Thyroid gland (tissue), 4 donors: ENCODE measurements at regions of chr17 and their contacts with region 1.

Region 1: GRCh38 chr17:700504-701094 is 14.0 kb downstream of the VPS53 start:
- DNase-seq: no peak
- H3K4me3 ChIP-seq: no peak overlapping the region
- H3K27ac ChIP-seq: no peak overlapping the region
- H3K4me1 ChIP-seq: peaks cover 29% of the 10 kb centered on the region in 2 donors
- H3K27me3 ChIP-seq: no peaks in the 10 kb centered on the region
- CTCF ChIP-seq: peak; percentile 34 to 81 (median 58)
- POLR2A ChIP-seq: no peak

Region 2: GRCh38 chr17:412211-413015 is 288.2 kb before region 1 on chr17:
- intact Hi-C with region 1: loop called (anchors 2 kb)
- DNase-seq: peak; percentile 55 to 63
- H3K4me3 ChIP-seq: no peak overlapping the region
- H3K27ac ChIP-seq: no peak overlapping the region
- H3K4me1 ChIP-seq: peaks cover 10 to 23% of the 10 kb centered on the region in 2 donors
- H3K27me3 ChIP-seq: no peaks in the 10 kb centered on the region
- CTCF ChIP-seq: peak; percentile 50 to 86 (median 81)
- POLR2A ChIP-seq: no peak

Region 3: GRCh38 chr17:520447-521182 is 180.0 kb before region 1 on chr17:
- intact Hi-C with region 1: no loop called
- DNase-seq: no peak
- H3K4me3 ChIP-seq: no peak overlapping the region
- H3K27ac ChIP-seq: peak overlapping the region in 1 of 3 donors; percentile 43
- H3K4me1 ChIP-seq: peaks cover 0 to 6% of the 10 kb centered on the region in 2 donors
- H3K27me3 ChIP-seq: no peaks in the 10 kb centered on the region
- CTCF ChIP-seq: no peak
- POLR2A ChIP-seq: no peak

Region 4: DNA sequence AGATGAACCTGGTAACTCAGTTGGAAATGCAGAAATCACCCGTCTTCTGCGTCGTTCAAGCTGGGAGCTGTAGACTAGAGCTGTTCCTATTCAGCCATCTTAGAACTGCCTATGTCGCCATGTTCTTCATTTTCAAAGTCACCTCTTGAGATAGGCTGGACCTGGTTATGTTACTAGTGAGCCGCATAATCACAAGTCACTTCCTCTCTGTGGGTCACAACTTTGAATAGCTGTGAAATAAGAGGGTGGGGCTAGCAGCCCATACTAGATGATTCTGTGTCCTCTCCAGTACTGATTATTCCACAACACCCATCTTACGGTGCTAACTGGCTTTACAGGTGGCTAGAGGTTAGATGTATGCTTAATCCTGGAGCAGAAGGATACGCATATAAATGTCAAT is 60.2 kb before region 1 on chr17:
- intact Hi-C with region 1: no loop called
- DNase-seq: no peak
- H3K4me3 ChIP-seq: no peak overlapping the region
- H3K27ac ChIP-seq: no peak overlapping the region
- H3K4me1 ChIP-seq: no peaks in the 10 kb centered on the region
- H3K27me3 ChIP-seq: no peaks in the 10 kb centered on the region
- CTCF ChIP-seq: no peak
- POLR2A ChIP-seq: no peak